ENCODE measurements at regions of chr10 and their contacts with region 1.

Region 1: GRCh38 chr10:119028900-119029612 is 458 bp upstream of the NANOS1 start:
- DNase-seq: peak; percentile 89 to 95 (median 92)
- ATAC-seq: peak; percentile 59 to 81 (median 78)
- H3K4me3 ChIP-seq: peak overlapping the region in 11 of 12 donors; percentile 14 to 86 (median 63)
- H3K27ac ChIP-seq: peak overlapping the region in 11 of 12 donors; percentile 27 to 88 (median 77)
- H3K4me1 ChIP-seq: peaks cover 0 to 53% (median 23%) of the 10 kb centered on the region in 12 donors
- H3K27me3 ChIP-seq: peaks cover 0 to 5% (median 0%) of the 10 kb centered on the region in 9 donors
- CTCF ChIP-seq: peak in 10 of 12 donors; percentile 13 to 54 (median 28)
- POLR2A ChIP-seq: peak in 1 of 2 donors; percentile 32

Region 2: DNA sequence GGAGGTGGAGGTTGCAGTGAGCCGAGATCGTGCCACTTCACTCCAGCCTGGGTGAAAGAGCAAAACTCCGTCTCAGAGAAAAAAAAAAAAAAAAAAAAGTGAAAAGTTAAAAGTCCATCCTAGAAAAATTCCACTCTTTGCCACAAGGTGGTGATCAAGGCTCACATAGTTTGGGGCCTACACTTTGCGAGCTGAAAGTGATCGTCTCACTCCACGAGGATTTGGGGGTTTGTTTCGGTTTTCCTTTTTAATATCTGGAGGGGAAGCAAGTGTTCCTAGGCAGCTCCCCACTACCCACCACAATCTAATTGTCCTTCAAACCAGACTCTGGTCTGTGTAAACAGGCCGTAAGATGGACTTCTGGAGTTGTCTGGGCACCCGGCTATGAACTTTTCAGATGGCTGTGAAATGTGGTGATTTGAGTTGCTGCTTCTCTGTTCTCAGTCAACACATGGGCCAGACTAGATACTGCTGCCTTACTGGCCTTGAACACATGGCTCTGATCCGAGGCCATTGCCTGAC is 460.7 kb before region 1 on chr10:
- intact Hi-C with region 1: loop called in 2 of 10 experiments (anchors 5 to 10 kb)
- DNase-seq: peak in 2 of 5 donors; percentile 48 to 54
- ATAC-seq: peak in 3 of 4 donors; percentile 35 to 73 (median 58)
- H3K4me3 ChIP-seq: peak overlapping the region in 2 of 12 donors; percentile 21 to 22
- H3K27ac ChIP-seq: no peak overlapping the region
- H3K4me1 ChIP-seq: peaks cover 0 to 23% (median 9%) of the 10 kb centered on the region in 12 donors
- H3K27me3 ChIP-seq: peaks cover 0 to 5% (median 0%) of the 10 kb centered on the region in 9 donors
- CTCF ChIP-seq: peak; percentile 64 to 82 (median 78)
- POLR2A ChIP-seq: no peak

Region 3: GRCh38 chr10:118754720-118755480 is 274.2 kb before region 1 on chr10 and contains the start of gene CACUL1:
- intact Hi-C with region 1: loop called in 3 of 10 experiments (anchors 2 to 10 kb)
- DNase-seq: peak; percentile 100
- ATAC-seq: peak; percentile 99 to 100 (median 99)
- H3K4me3 ChIP-seq: peak within 1 kb of the TSS; percentile 78 to 100 (median 94)
- H3K27ac ChIP-seq: peak within 1 kb of the TSS; percentile 25 to 93 (median 84)
- H3K4me1 ChIP-seq: peaks cover 4 to 40% (median 25%) of the 10 kb centered on the region in 12 donors
- H3K27me3 ChIP-seq: no peaks in the 10 kb centered on the region
- CTCF ChIP-seq: peak in 2 of 12 donors; percentile 9 to 11
- POLR2A ChIP-seq: peak in 1 of 2 donors; percentile 56
- total RNA-seq, gene CACUL1: 18.8 to 38.7 (median 24.8) TPM

Region 4: DNA sequence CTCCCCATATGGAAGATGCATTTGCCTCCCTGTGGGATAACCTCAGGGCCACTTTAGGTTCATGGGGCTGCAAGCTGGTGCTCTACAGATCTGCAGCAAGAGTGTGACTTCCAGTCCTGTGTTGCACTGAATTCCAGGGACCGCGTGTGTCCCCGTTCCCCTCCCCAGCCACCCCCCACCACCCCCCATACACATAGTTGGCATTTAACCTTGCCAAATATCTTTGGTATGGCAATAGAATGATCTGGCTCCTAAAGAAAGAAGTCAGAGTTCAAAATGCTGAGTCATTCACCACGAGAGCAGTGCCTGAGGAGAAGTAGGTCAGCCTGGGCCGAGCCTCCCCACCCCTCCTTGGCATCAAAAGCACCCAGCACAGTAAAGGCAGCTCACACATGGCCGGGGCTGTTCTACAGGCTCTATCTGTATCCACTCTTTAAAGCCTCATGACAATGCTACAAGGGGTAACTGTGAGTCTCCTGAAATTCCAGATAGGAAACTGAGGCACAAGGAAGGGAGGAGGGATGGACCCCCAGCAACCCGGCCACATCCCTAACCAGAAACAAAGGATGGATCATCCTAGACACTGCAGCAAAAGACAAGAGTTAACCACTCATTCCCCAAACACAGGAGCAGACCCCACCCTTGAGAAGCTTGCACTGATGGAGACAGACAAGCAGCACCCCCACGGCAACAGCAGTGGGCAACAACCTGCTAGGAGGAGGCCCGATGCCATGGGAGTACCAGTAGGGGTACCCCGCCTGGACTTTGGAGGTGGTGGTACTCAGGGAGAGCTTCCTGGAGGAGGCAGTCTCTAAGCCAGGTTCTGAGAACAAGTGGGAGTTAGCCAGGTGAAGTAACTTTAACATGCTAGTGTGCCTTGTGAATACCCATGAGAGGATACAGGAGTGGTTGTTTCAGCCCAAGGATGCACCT is 69.8 kb before region 1 on chr10:
- intact Hi-C with region 1: loop called in 2 of 10 experiments (anchors 2 to 5 kb)
- DNase-seq: peak; percentile 67 to 78 (median 71)
- ATAC-seq: peak; percentile 84 to 92 (median 88)
- H3K4me3 ChIP-seq: no peak overlapping the region
- H3K27ac ChIP-seq: peak overlapping the region in 10 of 12 donors; percentile 40 to 73 (median 58)
- H3K4me1 ChIP-seq: peaks cover 0 to 57% (median 20%) of the 10 kb centered on the region in 12 donors
- H3K27me3 ChIP-seq: no peaks in the 10 kb centered on the region
- CTCF ChIP-seq: no peak
- POLR2A ChIP-seq: no peak

Region 5: DNA sequence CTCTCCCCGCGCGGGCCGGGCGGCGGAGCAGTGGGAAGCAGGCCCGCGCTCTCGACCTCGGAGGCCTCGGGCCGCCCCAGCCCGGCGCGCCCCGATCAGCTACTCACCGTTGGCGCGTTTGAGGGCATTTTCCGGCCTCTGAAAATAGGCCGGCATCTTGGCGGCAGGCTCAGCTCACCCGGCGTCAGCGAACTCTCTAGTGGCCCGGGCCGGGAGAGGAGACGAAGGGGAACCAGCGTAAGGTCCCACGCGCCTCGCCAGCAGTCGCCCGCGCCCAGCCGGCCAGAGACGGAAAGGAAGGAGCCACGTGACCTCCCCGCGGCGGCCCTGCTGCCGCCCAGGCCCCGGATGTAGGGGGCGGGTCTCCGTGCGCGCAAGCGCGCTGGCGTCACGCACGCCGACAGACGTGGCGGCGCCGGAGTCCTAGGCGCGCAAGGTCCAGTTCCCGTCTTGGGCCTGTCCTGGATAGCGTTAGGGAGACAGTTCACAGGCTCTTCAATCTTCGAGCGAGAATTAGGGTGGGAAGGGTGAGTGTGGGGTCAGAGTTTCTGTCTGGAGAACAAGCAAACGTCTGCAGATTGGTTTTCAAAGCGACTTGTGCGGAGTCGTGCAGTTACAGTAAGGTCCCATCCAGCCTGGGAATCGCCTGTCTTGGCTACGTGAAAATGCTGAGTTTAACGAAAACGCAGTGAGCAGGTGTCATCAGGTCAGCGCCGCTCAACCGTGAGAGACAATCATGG is 51.6 kb after region 1 on chr10 and contains the start of gene EIF3A:
- intact Hi-C with region 1: loop called in 1 of 10 experiments (anchors 5 kb)
- DNase-seq: peak; percentile 93 to 97 (median 94)
- ATAC-seq: peak; percentile 92 to 97 (median 97)
- H3K4me3 ChIP-seq: peak within 1 kb of the TSS; percentile 76 to 100 (median 88)
- H3K27ac ChIP-seq: peak within 1 kb of the TSS; percentile 95 to 100 (median 98)
- H3K4me1 ChIP-seq: peaks cover 0 to 43% (median 32%) of the 10 kb centered on the region in 12 donors
- H3K27me3 ChIP-seq: no peaks in the 10 kb centered on the region
- CTCF ChIP-seq: no peak
- POLR2A ChIP-seq: peak; percentile 50 to 91
- total RNA-seq, gene EIF3A: 80.3 to 143 (median 110) TPM

Measured in heart left ventricle (tissue), 16 donors.